Endothelial cell of umbilical vein (primary cell): ENCODE measurements at regions of chr7 and their contacts with region 1.

Region 1: DNA sequence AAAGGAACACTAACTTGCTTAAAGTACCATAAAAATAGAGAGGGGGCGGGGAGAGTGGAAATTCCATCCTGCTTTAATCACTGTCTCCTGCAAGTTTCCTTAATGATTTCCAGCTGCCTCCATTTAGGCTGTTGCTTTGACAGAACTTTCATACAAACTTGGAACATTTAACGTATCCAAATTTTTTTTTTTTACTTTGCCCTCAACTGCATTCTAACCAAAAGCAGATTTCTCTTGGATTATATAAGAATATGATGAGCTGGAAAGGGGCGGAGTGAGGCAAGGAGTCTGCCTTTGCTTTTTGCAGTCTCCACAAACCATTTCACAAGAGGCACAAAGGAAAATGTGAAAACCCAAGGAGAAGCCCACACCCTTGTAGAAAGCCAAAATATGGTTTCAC is 46.6 kb upstream of the COL1A2 start:
- DNase-seq: peak; percentile 26
- H3K4me3 ChIP-seq: no peak overlapping the region
- H3K27ac ChIP-seq: no peak overlapping the region
- H3K4me1 ChIP-seq: no peaks in the 10 kb centered on the region
- H3K27me3 ChIP-seq: peaks cover 2% of the 10 kb centered on the region in 2 experiments
- CTCF ChIP-seq: no peak
- POLR2A ChIP-seq: no peak

Region 2: DNA sequence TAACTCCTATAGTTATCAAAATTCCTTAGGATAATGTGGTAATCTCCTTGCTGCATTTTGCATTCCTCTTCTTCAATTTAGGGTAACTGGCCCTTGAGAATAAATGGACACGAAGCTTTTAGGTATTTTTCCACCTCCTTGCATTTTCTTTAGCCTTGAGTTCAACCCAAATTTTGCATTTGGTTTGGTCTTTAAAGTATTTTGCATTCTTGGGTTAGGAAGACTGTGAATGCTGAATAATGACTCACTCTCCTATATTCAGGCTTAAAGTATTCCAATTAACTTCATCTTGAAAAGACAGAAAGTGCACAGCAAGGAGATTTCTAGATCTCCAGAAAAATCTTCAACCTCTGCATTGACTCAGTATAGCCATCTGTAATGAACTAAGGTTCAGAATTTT is 504.9 kb before region 1 on chr7:
- CTCF ChIA-PET with region 1: no interaction called
- POLR2A ChIA-PET with region 1: no interaction called
- dilution Hi-C with region 1: no loop called
- intact Hi-C with region 1: loop called (anchors 5 kb)
- DNase-seq: no peak
- H3K4me3 ChIP-seq: no peak overlapping the region
- H3K27ac ChIP-seq: no peak overlapping the region
- H3K4me1 ChIP-seq: no peaks in the 10 kb centered on the region
- H3K27me3 ChIP-seq: peaks cover 0 to 2% of the 10 kb centered on the region in 2 experiments
- CTCF ChIP-seq: no peak
- POLR2A ChIP-seq: no peak

Region 3: DNA sequence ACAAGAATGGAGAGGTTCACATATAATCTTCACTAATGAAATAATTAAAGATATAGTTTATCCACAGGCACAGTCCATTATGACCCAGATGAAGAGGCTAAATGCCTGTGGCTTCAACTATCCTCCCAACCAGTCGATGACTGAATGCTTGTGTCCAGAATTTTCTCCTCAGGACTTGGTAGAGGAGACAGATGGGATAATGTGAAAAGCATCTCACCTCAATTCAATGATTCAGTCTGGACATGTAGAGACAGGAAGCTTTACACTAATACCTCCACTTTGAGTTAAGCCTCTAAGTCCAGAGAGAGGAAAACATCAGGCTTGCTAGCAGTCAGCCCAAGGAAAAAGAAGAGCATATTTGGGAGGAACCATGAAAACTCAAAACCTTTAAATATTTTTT is 12.6 kb before region 1 on chr7:
- CTCF ChIA-PET with region 1: interaction called, 4 read pairs
- POLR2A ChIA-PET with region 1: no interaction called
- dilution Hi-C with region 1: no loop called
- intact Hi-C with region 1: loop called (anchors 2 kb)
- DNase-seq: no peak
- H3K4me3 ChIP-seq: no peak overlapping the region
- H3K27ac ChIP-seq: no peak overlapping the region
- H3K4me1 ChIP-seq: peaks cover 3% of the 10 kb centered on the region
- H3K27me3 ChIP-seq: no peaks in the 10 kb centered on the region
- CTCF ChIP-seq: no peak
- POLR2A ChIP-seq: no peak

Region 4: DNA sequence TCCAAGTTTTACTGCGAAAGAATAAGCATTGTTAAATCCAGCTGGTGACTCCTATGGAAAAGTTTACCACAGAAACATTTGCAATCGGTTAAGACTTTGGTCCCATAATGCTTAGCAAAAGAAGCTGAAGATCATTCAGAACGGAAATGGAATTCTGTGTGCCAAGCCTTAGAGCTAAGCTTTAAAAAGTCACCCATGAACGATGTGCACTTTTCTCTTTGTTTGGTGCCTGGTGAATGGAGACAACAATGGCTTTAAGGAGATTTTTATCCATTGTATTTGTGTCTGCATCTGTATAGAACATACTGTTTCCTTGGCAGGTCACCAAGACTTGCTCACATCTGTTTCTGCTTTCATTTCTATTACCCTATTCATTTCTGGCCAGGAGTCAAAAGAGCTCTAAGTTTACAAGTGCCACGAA is 20.2 kb after region 1 on chr7:
- CTCF ChIA-PET with region 1: interaction called, 5 read pairs
- POLR2A ChIA-PET with region 1: no interaction called
- dilution Hi-C with region 1: no loop called
- intact Hi-C with region 1: loop called (anchors 2 kb)
- DNase-seq: peak; percentile 97
- H3K4me3 ChIP-seq: peak overlapping the region in 1 of 3 experiments; percentile 30
- H3K27ac ChIP-seq: peak overlapping the region; percentile 88
- H3K4me1 ChIP-seq: peaks cover 15% of the 10 kb centered on the region
- H3K27me3 ChIP-seq: no peaks in the 10 kb centered on the region
- CTCF ChIP-seq: no peak
- POLR2A ChIP-seq: no peak